ENCODE measurements at regions of chr14 and their contacts with region 1.

Region 1: GRCh38 chr14:60331201-60332045 is 82.4 kb downstream of the PPM1A start:
- DNase-seq: peak; percentile 43 to 87 (median 70)
- ATAC-seq: peak; percentile 76 to 82 (median 78)
- H3K4me3 ChIP-seq: peak overlapping the region; percentile 59 to 78
- H3K4me3 Mint-ChIP-seq: peak overlapping the region; percentile 86 to 97 (median 91)
- H3K27ac ChIP-seq: peak overlapping the region; percentile 53
- H3K27ac Mint-ChIP-seq: peak overlapping the region; percentile 93 to 94
- H3K4me1 ChIP-seq: peaks cover 2 to 13% of the 10 kb centered on the region in 2 experiments
- H3K4me1 Mint-ChIP-seq: peaks cover 29 to 32% (median 30%) of the 10 kb centered on the region in 3 donors
- H3K27me3 ChIP-seq: peaks cover 0 to 16% of the 10 kb centered on the region in 2 experiments
- H3K27me3 Mint-ChIP-seq: peaks cover 18 to 34% of the 10 kb centered on the region in 2 donors

Region 2: GRCh38 chr14:60248697-60249318 is 82.6 kb before region 1 on chr14 and contains the start of gene PPM1A:
- CTCF ChIA-PET with region 1: interaction called in 1 of 2 experiments, 24 read pairs
- POLR2A ChIA-PET with region 1: interaction called, 4 to 6 read pairs
- DNase-seq: peak; percentile 88 to 99 (median 96)
- ATAC-seq: peak; percentile 79 to 83 (median 79)
- H3K4me3 ChIP-seq: peak within 1 kb of the TSS; percentile 83 to 91
- H3K4me3 Mint-ChIP-seq: peak within 1 kb of the TSS; percentile 88 to 96 (median 94)
- H3K27ac ChIP-seq: peak within 1 kb of the TSS; percentile 98
- H3K27ac Mint-ChIP-seq: peak within 1 kb of the TSS; percentile 99
- H3K4me1 ChIP-seq: peaks cover 21 to 32% of the 10 kb centered on the region in 2 experiments
- H3K4me1 Mint-ChIP-seq: peaks cover 49 to 67% (median 53%) of the 10 kb centered on the region in 3 donors
- H3K27me3 ChIP-seq: no peaks in the 10 kb centered on the region
- H3K27me3 Mint-ChIP-seq: no peaks in the 10 kb centered on the region
- total RNA-seq, gene PPM1A: 42.8 to 71.6 (median 46.1) TPM

Region 3: DNA sequence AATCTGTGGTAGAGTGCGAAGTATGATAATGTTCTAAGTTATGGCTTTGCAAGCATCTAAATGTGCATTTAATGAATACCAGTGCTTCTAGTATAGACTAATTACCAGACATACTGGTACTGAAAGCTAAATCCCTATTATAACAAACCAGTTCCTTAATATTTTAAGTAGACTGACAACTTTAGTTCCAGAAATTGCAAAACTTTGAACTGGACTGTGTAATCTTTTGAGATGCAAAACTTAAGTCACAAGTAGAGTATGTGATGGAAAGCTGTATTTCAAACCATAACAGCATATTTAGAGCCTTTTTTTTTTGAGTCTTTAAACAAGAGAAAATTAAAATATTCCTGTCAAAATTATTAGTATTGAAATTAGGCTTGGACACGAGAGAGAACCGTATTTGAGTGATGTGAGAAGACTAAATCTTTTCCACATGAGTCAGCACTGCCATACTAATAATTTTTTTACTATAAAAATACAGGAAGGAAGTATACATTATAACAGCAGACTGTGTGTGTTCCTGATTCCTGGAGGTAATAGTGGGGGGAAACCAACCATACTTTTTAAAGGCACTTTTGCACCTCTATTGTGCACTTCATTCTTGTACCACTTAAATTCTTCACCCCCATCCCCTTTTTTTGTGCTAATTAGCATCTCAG is 36.9 kb before region 1 on chr14:
- CTCF ChIA-PET with region 1: no interaction called
- POLR2A ChIA-PET with region 1: no interaction called
- DNase-seq: no peak
- ATAC-seq: no peak
- H3K4me3 ChIP-seq: no peak overlapping the region
- H3K4me3 Mint-ChIP-seq: no peak overlapping the region
- H3K27ac ChIP-seq: no peak overlapping the region
- H3K27ac Mint-ChIP-seq: no peak overlapping the region
- H3K4me1 ChIP-seq: no peaks in the 10 kb centered on the region
- H3K4me1 Mint-ChIP-seq: no peaks in the 10 kb centered on the region
- H3K27me3 ChIP-seq: no peaks in the 10 kb centered on the region
- H3K27me3 Mint-ChIP-seq: no peaks in the 10 kb centered on the region

Region 4: DNA sequence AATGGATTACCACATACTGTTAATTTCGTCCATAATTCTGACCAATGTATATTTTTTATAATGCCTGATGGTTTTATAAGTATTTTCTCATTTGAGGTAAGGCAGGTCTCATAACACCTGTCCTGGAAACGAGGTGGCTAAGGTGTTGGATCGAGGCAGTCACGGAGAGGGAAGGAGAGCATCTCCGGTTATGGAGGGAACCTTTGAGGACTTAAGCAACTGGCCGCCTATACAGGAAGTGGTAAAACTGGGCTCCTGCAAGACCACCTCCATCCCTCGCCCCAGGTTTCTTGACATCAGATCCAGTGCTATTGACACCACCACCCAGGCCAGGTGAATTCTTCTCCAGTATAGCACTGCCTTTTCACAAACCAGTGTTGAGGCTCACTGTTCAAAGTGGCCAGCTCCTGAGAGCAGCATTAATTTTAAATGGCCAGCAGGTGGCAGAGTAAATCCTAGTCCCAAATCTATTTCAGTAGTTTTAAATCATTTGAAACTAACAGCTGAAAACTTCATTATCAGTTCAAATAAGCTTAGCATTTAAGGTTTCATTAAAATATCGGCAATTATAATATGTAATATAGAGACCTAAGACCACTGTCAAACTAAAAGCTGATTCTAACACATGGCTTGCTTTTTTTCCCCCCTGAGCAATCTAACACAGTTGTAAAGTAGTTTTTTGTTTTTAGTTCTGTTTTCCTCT is 18.4 kb after region 1 on chr14:
- CTCF ChIA-PET with region 1: interaction called, 4 to 14 read pairs
- POLR2A ChIA-PET with region 1: no interaction called
- DNase-seq: peak in 13 of 35 experiments; percentile 1 to 59 (median 11)
- ATAC-seq: peak; percentile 40 to 53 (median 46)
- H3K4me3 ChIP-seq: no peak overlapping the region
- H3K4me3 Mint-ChIP-seq: no peak overlapping the region
- H3K27ac ChIP-seq: no peak overlapping the region
- H3K27ac Mint-ChIP-seq: no peak overlapping the region
- H3K4me1 ChIP-seq: no peaks in the 10 kb centered on the region
- H3K4me1 Mint-ChIP-seq: peaks cover 0 to 2% (median 0%) of the 10 kb centered on the region in 3 donors
- H3K27me3 ChIP-seq: peaks cover 0 to 3% of the 10 kb centered on the region in 2 experiments
- H3K27me3 Mint-ChIP-seq: peaks cover 3 to 6% of the 10 kb centered on the region in 2 donors

Measured in T-cell (primary cell).